ENCODE measurements at regions of chr16 and their contacts with region 1.

Region 1: DNA sequence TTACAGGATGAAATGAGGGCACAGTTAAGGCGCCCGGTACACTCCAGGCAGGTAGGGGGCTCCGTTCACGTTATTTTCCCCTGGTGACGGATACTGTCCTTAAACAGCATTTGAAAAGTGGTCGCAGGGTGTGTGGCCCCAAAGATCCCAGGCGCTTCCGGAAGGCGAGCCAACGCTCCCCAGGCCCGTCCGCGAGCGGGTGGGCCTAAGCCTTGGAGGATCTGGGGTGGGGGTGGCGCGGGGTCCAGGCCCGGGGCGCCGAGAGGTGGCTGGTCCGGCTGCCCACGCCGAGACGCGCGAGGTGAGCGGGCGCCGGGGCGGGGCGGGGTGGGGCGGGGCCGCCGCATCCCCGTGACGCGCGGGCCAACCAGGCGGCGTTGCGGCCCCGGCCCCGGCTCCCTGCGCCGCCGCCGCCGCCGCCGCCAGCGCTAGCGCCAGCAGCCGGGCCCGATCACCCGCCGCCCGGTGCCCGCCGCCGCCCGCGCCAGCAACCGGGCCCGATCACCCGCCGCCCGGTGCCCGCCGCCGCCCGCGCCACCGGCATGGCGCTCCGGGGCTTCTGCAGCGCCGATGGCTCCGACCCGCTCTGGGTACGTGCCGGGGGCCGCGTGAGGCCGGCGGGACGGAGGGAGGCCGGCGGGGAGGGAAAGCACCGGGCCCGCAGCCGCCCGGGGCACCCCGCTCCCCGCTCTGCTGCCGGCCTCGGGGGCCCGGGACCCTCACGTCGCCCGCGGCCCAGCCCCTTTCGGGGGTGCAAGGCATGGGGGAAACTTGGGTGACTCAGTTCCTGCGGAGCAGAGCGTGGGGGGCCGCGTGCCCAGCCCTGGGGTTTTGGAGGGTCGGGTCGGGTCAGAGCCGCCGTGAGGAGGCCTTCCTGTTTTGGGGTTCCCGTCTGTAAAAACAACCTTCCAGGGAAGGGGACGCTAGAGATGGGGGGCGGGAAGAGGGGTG is at the start of gene ABCC1:
- DNase-seq: peak; percentile 39
- H3K4me3 ChIP-seq: peak within 1 kb of the TSS; percentile 77 to 98 (median 95)
- H3K27ac ChIP-seq: peak within 1 kb of the TSS; percentile 88
- H3K4me1 ChIP-seq: peaks cover 30% of the 10 kb centered on the region
- H3K27me3 ChIP-seq: no peaks in the 10 kb centered on the region
- CTCF ChIP-seq: no peak
- POLR2A ChIP-seq: peak; percentile 30
- total RNA-seq, gene ABCC1: 71.4 and 89.2 TPM in 2 replicates

Region 2: GRCh38 chr16:15829460-15829859 is 120.0 kb before region 1 on chr16:
- CTCF ChIA-PET with region 1: no interaction called
- POLR2A ChIA-PET with region 1: no interaction called
- dilution Hi-C with region 1: no loop called
- intact Hi-C with region 1: no loop called
- DNase-seq: no peak
- H3K4me3 ChIP-seq: no peak overlapping the region
- H3K27ac ChIP-seq: no peak overlapping the region
- H3K4me1 ChIP-seq: no peaks in the 10 kb centered on the region
- H3K27me3 ChIP-seq: peaks cover 0 to 2% of the 10 kb centered on the region in 2 experiments
- CTCF ChIP-seq: no peak
- POLR2A ChIP-seq: no peak

Region 3: GRCh38 chr16:15888072-15888976 is 61.2 kb before region 1 on chr16 and contains the start of gene CEP20:
- CTCF ChIA-PET with region 1: interaction called, 4 read pairs
- POLR2A ChIA-PET with region 1: no interaction called
- dilution Hi-C with region 1: no loop called
- intact Hi-C with region 1: loop called (anchors 2 kb)
- DNase-seq: peak; percentile 99
- H3K4me3 ChIP-seq: peak within 1 kb of the TSS; percentile 55 to 97 (median 94)
- H3K27ac ChIP-seq: peak within 1 kb of the TSS; percentile 73
- H3K4me1 ChIP-seq: peaks cover 15% of the 10 kb centered on the region
- H3K27me3 ChIP-seq: no peaks in the 10 kb centered on the region
- CTCF ChIP-seq: peak in 1 of 2 donors; percentile 18
- POLR2A ChIP-seq: peak; percentile 71
- total RNA-seq, gene CEP20: 28.0 and 30.5 TPM in 2 replicates

Region 4: GRCh38 chr16:15899538-15900100 is 49.9 kb before region 1 on chr16:
- CTCF ChIA-PET with region 1: no interaction called
- POLR2A ChIA-PET with region 1: no interaction called
- dilution Hi-C with region 1: no loop called
- intact Hi-C with region 1: no loop called
- DNase-seq: no peak
- H3K4me3 ChIP-seq: no peak overlapping the region
- H3K27ac ChIP-seq: no peak overlapping the region
- H3K4me1 ChIP-seq: no peaks in the 10 kb centered on the region
- H3K27me3 ChIP-seq: no peaks in the 10 kb centered on the region
- CTCF ChIP-seq: no peak
- POLR2A ChIP-seq: no peak

Region 5: DNA sequence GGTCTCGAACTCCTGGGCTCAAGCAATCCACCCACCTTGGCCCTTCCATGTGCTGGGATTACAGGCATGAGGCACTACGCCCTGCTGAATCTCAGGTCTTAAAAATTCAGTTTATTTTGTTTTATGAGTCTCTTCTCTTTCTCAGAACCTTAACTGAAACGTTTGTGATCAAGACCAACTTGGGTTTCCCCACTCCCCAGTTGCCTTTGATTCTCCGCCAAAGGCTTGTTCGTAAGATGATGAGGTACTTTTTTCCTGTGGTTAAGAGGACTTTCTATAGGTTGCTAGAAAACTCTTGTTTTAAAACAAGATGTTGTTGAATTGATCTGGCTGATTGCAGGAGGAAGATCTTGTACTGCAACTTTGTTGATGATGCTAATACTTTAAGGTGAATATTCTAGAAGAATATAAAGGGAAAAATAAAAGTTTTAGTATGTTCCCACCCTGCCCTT is 11.6 kb after region 1 on chr16:
- CTCF ChIA-PET with region 1: interaction called, 12 read pairs
- POLR2A ChIA-PET with region 1: no interaction called
- dilution Hi-C with region 1: no loop called
- intact Hi-C with region 1: loop called (anchors 1 kb)
- DNase-seq: peak; percentile 77
- H3K4me3 ChIP-seq: no peak overlapping the region
- H3K27ac ChIP-seq: peak overlapping the region; percentile 43
- H3K4me1 ChIP-seq: peaks cover 49% of the 10 kb centered on the region
- H3K27me3 ChIP-seq: no peaks in the 10 kb centered on the region
- CTCF ChIP-seq: no peak
- POLR2A ChIP-seq: no peak

Region 6: GRCh38 chr16:15988268-15989013 is 39.0 kb after region 1 on chr16:
- CTCF ChIA-PET with region 1: interaction called, 5 read pairs
- POLR2A ChIA-PET with region 1: interaction called, 5 read pairs
- dilution Hi-C with region 1: no loop called
- intact Hi-C with region 1: loop called (anchors 2 kb)
- DNase-seq: peak; percentile 85
- H3K4me3 ChIP-seq: no peak overlapping the region
- H3K27ac ChIP-seq: peak overlapping the region; percentile 93
- H3K4me1 ChIP-seq: peaks cover 43% of the 10 kb centered on the region
- H3K27me3 ChIP-seq: no peaks in the 10 kb centered on the region
- CTCF ChIP-seq: no peak
- POLR2A ChIP-seq: no peak

Region 7: GRCh38 chr16:15996432-15997109 is 47.1 kb after region 1 on chr16:
- CTCF ChIA-PET with region 1: no interaction called
- POLR2A ChIA-PET with region 1: interaction called, 4 read pairs
- dilution Hi-C with region 1: no loop called
- intact Hi-C with region 1: loop called (anchors 1 kb)
- DNase-seq: peak; percentile 89
- H3K4me3 ChIP-seq: no peak overlapping the region
- H3K27ac ChIP-seq: peak overlapping the region; percentile 91
- H3K4me1 ChIP-seq: peaks cover 50% of the 10 kb centered on the region
- H3K27me3 ChIP-seq: no peaks in the 10 kb centered on the region
- CTCF ChIP-seq: peak in 1 of 2 donors; percentile 7
- POLR2A ChIP-seq: peak; percentile 51

Region 8: DNA sequence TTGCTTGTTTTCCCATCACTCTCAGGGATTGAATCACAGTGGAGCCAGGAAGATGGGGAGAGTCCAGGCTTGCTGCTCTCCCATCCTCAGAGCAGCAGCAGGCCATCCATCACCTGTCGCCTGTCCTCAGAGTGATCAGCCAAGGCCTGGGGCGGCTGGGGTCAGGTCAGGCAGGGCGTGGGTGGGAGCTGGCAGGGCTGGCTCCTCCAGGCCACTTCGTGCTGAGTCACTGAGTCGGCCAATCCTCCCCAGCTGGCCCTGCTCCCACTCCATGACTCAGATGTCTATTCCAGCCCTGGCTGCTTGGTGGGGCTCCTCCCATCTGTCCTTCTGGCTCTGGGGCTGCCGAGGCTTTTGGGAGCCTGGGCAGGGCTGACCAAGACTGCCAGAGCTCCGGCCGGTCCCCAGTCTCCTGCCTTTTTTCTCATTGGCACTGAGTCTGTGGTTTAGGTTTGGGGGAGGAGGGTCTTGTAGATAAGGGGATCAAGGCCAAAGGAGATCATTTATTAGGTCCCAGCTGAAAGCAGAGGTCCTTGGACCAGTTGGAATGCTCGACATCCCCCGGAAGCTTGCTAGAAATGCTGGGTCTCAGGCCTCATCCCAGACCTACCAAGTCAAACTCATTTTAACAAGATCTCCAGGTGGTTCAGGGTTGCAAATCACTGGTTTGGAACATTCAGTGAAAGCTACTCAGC is 72.7 kb after region 1 on chr16:
- CTCF ChIA-PET with region 1: interaction called, 4 read pairs
- POLR2A ChIA-PET with region 1: no interaction called
- dilution Hi-C with region 1: no loop called
- intact Hi-C with region 1: loop called (anchors 2 kb)
- DNase-seq: peak; percentile 96
- H3K4me3 ChIP-seq: no peak overlapping the region
- H3K27ac ChIP-seq: peak overlapping the region; percentile 91
- H3K4me1 ChIP-seq: peaks cover 35% of the 10 kb centered on the region
- H3K27me3 ChIP-seq: no peaks in the 10 kb centered on the region
- CTCF ChIP-seq: no peak
- POLR2A ChIP-seq: peak; percentile 33

Region 9: DNA sequence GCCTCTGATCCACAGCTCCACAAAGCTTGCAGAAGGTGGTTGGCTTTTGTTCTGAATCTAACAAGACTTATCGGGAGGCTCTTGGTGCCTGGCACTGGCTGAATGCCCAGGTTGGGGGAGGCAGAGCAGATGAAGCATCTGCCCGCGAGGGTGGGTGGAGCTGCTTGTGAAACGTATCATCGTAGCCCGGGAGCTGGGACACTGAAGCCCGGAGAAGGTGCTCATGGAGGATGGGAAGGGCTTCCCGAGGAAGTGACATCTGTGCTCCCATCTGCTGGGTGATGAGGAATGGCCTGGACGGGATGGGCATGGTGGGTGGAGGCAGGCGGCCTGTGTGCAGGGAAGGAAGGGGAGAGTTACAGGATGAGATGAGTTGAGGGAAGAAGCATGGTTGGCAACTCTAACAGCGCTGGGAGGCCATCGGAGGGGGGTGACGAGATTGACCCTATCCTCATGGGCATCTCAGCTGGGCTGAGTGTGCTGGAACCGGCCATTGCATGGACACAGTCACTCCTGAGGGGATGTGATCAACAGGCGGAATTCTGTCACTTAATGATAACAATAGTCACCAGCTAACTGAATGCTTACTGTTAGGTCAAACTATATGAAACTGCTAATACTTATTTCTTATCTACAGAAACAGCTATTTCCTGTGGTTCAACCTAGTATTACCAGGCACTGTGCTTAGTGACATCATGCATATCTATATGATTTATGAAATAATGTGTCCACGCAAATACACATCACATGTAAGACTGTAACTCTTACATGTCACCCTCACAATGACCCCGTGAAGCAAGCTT is 171.1 kb after region 1 on chr16:
- CTCF ChIA-PET with region 1: no interaction called
- POLR2A ChIA-PET with region 1: interaction called, 3 read pairs
- dilution Hi-C with region 1: no loop called
- intact Hi-C with region 1: loop called (anchors 2 kb)
- DNase-seq: peak; percentile 98
- H3K4me3 ChIP-seq: peak overlapping the region in 1 of 3 experiments; percentile 4
- H3K27ac ChIP-seq: peak overlapping the region; percentile 83
- H3K4me1 ChIP-seq: peaks cover 19% of the 10 kb centered on the region
- H3K27me3 ChIP-seq: no peaks in the 10 kb centered on the region
- CTCF ChIP-seq: no peak
- POLR2A ChIP-seq: peak; percentile 81

Measured in endothelial cell of umbilical vein (primary cell).